ENCODE measurements at regions of chr6 and their contacts with region 1.

Region 1: DNA sequence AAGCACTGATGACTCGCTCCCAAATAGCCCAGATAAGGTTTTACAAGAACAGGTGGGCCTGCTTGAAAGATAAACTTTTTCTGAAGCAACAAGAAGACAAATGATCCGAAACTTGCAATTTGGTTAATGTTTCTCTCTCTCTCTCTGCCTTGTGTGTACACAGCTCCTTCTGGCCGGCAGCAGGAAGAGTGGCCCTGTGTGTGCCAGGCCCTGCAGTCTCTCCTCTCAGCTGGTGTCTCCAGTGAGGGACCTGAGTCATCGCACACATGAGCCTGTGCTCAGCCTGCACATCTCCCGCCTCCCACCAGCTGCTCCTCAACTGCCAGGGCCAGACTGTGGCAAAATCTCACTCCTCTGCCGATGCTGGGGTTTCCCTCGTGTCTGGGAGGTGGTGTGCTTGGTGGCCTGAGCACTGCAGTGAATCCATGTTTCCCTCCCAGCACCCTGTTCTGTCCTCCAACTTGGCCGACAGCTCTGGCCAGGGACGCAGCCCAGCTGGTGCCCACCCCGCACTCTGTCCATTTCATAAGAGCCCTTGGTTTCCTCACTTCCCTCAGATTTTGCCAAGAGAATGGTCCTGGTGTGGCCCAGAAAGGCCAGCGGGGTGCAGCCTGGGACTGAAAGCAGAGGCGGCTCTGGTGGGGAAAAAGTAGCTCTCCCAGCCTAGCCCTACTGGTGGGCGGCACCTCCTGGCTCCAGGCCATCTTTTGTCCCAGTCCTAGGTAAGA is 49.4 kb downstream of the ERMARD start:
- DNase-seq: peak; percentile 52 to 72
- ATAC-seq: peak; percentile 94 to 95
- H3K4me3 ChIP-seq: no peak overlapping the region
- H3K27ac ChIP-seq: peak overlapping the region; percentile 80 to 89
- H3K4me1 ChIP-seq: peaks cover 32% of the 10 kb centered on the region
- CTCF ChIP-seq: no peak
- EP300 ChIP-seq: peak in 1 of 2 experiments; percentile 70; a peak in 1 of 5 replicates
- POLR2A ChIP-seq: no peak
- RAD21 ChIP-seq: no peak

Region 2: DNA sequence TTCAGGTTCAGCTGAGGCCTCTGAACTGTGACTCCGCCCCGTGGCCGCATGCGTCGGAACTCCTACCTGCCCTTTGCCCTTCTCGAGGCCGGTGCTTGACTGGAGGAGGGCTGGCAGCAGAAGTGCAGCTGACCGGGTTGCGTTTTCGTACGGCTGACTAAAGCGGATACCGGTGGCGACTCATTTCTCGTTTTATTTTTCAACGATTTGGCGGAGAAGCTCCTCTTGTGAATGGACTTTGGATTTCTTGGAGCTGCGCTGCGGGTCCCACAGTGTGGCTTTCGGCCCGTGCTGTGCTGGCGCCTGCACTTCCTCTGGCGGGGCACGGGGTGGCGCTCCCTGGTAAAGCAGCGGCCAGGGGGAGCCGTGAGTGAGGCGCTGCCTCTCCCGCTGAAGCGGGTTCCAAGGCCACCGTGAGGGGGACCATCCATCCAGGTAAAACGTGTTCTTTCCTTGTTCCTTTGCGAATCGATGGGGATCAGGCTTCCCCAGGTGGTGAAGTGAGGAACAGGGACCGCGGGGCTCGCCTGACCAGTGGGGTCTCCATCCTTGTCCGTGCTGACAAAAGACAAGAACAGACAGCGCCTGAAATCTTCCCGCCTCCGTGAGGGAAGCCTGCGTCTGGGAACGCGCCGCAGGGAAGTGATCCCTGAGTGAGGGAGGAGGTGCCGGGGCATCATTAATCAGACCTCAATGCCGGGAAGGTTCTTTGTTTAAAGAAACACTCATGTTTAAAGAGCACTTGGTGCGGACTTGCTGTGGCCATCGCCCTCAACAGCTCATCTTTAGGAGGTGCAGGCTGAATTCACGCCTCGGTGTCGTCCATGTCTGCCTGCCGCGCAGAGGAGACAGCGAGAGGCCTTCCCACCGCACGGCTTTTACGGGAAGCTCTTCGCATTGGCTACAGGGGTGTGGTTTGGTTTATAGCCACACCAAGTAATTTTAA is 10.6 kb before region 1 on chr6:
- CTCF ChIA-PET with region 1: interaction called, 13 read pairs
- POLR2A ChIA-PET with region 1: no interaction called
- DNase-seq: peak; percentile 67 to 73
- ATAC-seq: peak; percentile 96 to 99
- H3K4me3 ChIP-seq: peak overlapping the region; percentile 50
- H3K27ac ChIP-seq: peak overlapping the region; percentile 71 to 84
- H3K4me1 ChIP-seq: 0 out of 3 replicates have a peak, but pooled peaks cover 5% of the 10 kb centered on the region
- CTCF ChIP-seq: peak; percentile 78
- EP300 ChIP-seq: no peak
- POLR2A ChIP-seq: 0 out of 2 replicates have a peak, but pooled peaks have one; percentile 10
- RAD21 ChIP-seq: peak; percentile 80 to 90

Region 3: DNA sequence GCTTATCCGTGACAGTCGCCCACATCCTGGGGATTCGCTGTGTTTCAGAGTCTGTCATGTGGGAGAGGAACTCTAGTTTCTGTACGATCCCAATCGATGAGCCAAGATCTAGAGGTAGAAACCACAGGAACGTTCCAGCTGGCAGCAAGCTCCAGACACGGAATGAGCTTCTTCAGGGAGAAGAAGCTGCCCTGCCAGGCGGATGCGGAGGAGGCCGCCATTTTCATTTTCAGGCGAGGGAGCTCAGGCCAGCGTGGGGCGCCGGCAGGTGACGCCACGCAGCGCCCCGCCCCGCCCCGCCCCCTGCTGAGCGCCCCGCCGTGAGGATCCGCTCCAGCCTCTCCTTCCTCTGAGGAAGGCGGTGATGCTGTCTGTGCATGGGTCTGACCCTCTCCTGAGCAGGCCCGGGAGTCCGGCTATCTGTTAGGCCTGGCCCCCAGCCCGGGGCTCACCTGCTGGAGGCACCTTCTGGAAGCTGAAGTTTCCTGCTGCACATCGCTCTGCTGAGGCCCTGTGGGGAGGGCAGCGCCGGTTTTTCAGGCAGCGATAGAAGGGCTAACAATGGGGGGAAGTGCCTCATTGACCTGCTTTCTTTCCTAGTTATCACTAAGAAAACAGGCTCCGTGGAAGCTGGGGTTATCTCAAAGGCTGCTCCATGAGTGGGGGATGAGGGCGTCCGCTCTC is 98.1 kb after region 1 on chr6:
- CTCF ChIA-PET with region 1: no interaction called
- POLR2A ChIA-PET with region 1: no interaction called
- DNase-seq: no peak
- ATAC-seq: no peak
- H3K4me3 ChIP-seq: no peak overlapping the region
- H3K27ac ChIP-seq: no peak overlapping the region
- H3K4me1 ChIP-seq: no peaks in the 10 kb centered on the region
- CTCF ChIP-seq: no peak
- EP300 ChIP-seq: no peak
- POLR2A ChIP-seq: no peak
- RAD21 ChIP-seq: no peak